Motor neuron (in vitro differentiated cells): ENCODE measurements at regions of chr14 and their contacts with region 1.

Region 1: DNA sequence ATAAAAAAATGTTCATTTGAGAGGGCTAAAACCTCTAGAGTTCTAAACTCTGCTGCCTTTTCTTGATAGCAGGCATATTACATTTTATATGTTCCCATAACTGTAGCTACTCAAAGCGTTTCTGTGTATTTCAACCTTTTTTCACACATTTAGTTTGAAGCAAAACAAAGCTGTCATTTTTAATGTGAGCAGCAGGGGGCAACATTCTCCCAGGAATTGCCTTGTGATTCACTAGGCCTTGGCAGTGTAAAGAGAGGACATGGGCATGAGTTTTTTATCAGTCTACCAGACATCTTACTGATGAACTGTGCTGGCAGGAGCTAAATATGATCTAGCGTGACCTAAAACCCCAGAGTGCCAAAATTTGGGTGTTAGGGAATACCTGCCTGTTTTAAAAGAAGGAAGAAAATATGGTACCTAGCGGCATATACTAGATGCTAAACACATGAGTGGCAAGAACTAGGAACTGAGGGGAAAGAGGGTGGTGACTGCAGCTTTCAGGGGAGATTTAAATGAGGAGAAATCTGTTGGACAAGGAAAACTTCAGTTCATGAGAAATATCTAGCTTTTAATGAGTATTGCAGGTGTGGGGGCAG is 65.3 kb downstream of the IFT43 start:
- ATAC-seq: peak; percentile 42 to 86 (median 68)
- H3K4me3 ChIP-seq: no peak overlapping the region
- H3K27ac ChIP-seq: no peak overlapping the region
- H3K4me1 ChIP-seq: peaks cover 0 to 5% of the 10 kb centered on the region in 2 donors

Region 2: DNA sequence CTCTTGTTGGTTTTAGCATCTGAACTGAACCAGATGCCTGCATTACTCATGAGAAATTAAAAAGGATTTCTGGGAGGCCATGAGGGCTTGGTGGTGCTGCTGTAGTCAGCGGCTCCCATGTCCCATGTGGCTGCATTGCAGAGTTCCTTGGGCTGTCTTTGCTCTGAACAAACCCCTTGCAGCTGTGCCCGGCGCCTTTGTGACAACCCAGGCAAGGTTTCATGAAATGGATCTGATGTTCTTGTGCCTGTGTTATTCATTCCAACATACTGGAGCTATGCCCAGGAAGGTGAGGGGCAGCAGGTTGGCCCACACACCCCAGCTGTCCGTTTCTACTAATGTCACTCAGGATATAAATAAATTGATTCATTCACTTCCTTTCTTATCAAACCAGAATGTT is 109.9 kb before region 1 on chr14:
- in situ Hi-C with region 1: no loop called
- ATAC-seq: peak in 2 of 8 experiments; percentile 27 to 31
- H3K4me3 ChIP-seq: no peak overlapping the region
- H3K27ac ChIP-seq: no peak overlapping the region
- H3K4me1 ChIP-seq: no peaks in the 10 kb centered on the region

Region 3: GRCh38 chr14:76352639-76353281 is 301.9 kb after region 1 on chr14:
- in situ Hi-C with region 1: loop called in 5 of 9 experiments (anchors 10 to 25 kb)
- ATAC-seq: peak; percentile 39 to 98 (median 44)
- H3K4me3 ChIP-seq: peak overlapping the region in 1 of 5 donors; percentile 8
- H3K27ac ChIP-seq: no peak overlapping the region
- H3K4me1 ChIP-seq: peaks cover 16 to 19% of the 10 kb centered on the region in 2 donors

Region 4: DNA sequence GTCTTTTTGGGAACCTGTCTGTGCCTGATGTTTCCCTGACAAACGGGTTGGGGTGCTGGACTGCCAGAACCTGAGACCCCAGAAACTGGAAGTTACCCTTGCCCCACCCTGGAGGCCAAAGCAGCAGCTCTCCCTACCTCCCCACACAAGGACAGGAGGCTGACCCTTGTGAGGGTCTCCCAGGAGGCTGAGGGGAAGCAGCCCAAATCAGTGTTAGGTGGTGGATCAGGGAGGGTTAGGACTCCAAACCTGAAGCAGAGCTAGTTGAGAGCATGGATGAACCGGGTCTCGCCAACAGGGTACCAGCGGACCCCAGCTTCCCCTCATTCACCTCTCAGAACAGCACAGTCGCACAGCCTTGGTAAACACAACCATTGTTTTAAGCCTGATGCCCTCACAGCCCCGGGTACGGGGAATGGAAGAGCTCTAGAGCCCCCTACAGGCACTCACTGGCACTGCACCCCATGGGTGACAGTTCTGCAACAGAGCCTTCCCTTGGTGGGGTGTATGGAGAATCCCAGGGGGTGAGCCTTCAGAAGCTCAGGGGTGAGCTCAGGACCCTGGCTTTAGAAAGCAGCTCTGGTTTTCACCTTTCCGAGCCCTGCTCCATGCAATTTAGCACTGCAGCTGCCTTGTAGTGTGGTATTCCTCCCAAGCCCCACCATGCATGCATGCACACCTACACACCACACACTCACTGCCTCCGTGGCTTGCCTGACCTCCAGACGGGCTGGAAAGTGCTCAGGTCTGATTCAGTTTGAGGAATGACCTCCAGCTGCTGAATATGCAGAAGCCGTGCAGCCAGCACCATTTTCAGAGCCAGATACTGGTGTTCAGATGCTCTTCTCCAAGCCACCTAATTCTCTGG is 336.3 kb after region 1 on chr14:
- in situ Hi-C with region 1: loop called in 2 of 9 experiments (anchors 25 kb)
- ATAC-seq: peak; percentile 91 to 99 (median 97)
- H3K4me3 ChIP-seq: no peak overlapping the region
- H3K27ac ChIP-seq: no peak overlapping the region
- H3K4me1 ChIP-seq: peaks cover 3 to 8% of the 10 kb centered on the region in 2 donors